GM13976 (cell line): ENCODE measurements at regions of chr12 and their contacts with region 1.

Region 1: GRCh38 chr12:65121049-65121955 is at the start of gene WIF1:
- DNase-seq: peak; percentile 66
- CTCF ChIP-seq: peak; percentile 38

Region 2: GRCh38 chr12:64470495-64470894 is 650.8 kb before region 1 on chr12:
- in situ Hi-C with region 1: no loop called
- DNase-seq: no peak
- CTCF ChIP-seq: no peak

Region 3: DNA sequence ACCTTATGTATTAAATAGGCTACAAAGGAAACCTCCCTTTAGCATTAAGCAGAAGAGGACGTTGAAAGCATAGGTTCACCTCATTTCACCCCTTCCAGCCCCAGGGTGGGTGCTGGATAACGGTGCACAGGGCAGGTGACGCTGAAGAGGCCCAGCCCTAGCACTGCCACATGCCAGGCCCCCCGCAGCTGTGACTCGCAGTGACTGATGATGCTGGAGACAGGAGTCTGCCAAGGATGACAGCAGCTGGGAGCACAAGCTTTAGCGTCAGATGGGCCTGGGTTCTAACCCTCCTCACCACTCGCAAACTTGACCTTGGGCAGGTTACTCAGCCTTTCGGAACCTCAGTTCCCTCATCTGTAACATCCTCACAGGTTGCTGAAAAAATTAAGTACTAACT is 592.7 kb before region 1 on chr12:
- in situ Hi-C with region 1: loop called (anchors 25 kb)
- DNase-seq: no peak
- CTCF ChIP-seq: no peak

Region 4: GRCh38 chr12:64796208-64796845 is 325.0 kb before region 1 on chr12:
- in situ Hi-C with region 1: loop called (anchors 10 kb)
- DNase-seq: peak; percentile 64
- CTCF ChIP-seq: peak; percentile 63